ENCODE measurements at regions of chr7 and their contacts with region 1.

Region 1: DNA sequence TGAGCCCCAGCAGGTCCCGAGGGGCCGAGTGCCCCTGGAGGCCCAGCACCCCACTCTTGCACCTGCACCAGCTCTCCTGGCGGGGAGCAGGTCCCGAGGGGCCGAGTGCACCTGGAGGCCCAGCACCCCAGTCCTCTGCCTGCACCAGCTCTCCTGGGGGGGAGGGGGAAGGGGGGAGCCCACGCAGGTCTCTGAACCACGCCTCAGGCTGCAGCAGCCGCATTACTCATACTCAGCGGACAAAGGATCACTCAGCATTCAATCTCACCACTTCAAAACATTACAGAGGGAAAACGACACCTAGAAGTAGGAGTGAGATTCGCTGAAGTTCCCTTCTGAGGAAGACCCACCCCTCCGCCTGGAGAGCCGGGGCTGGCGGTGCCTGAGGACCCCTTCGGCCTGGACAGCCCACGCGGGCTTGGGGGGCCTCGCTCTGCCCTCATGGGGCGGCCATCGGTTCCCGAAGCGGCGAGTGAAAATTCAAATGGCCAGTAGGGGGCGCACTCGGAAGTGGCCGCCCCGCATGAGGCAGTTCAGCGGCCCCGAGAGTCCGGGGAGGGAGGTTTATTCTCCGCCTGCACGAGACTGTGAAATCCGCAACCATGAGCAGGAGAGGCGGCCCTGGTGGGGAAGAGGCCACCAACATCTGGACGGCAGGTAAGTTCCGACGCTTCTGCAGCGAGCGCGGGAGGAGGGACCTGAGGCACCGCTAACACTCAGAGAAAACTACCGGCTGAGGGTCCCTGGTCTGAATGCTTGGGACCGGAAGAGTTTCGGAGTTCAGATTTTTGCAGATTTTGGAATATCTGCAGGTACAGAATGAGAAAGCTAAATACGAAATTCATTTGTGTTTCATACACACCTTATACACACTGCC is 1.1 kb upstream of the GPER1 start:
- DNase-seq: peak; percentile 42
- ATAC-seq: peak; percentile 77
- H3K4me3 ChIP-seq: peak overlapping the region; percentile 47
- H3K27ac ChIP-seq: no peak overlapping the region; the same call in 1 of the 2 replicates
- H3K4me1 ChIP-seq: peaks cover 31% of the 10 kb centered on the region
- H3K27me3 ChIP-seq: no peaks in the 10 kb centered on the region
- CTCF ChIP-seq: peak; percentile 75
- POLR2A ChIP-seq: no peak
- RAD21 ChIP-seq: peak; percentile 49

Region 2: DNA sequence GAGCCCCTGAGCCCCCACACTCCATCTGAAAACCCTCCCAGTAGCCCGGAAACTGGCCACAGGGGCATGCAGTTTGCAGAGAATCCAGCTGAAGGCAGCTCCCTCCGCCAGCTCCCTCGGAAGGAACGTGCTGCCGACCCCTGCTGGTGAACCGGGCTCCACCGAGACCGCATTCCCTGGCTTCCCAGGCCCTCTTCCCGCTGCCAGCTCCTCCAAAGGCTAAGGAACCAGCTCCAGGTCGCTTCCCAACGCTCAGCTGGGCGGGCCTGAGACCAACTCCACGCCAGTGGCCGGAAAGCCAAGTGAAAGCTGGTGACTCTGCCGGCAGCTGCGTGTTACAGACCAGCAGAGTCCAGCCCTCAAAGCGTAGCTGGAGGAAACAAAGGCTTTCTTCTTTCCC is 36.9 kb after region 1 on chr7:
- CTCF ChIA-PET with region 1: interaction called, 4 read pairs
- POLR2A ChIA-PET with region 1: no interaction called
- dilution Hi-C with region 1: no loop called
- in situ Hi-C with region 1: no loop called
- intact Hi-C with region 1: loop called (anchors 2 kb)
- DNase-seq: peak; percentile 79
- ATAC-seq: peak; percentile 96
- H3K4me3 ChIP-seq: no peak overlapping the region
- H3K27ac ChIP-seq: peak overlapping the region; percentile 10; the same call in 1 of the 2 replicates
- H3K4me1 ChIP-seq: peaks cover 3% of the 10 kb centered on the region
- H3K27me3 ChIP-seq: no peaks in the 10 kb centered on the region
- CTCF ChIP-seq: peak; percentile 69
- POLR2A ChIP-seq: no peak
- RAD21 ChIP-seq: peak; percentile 56

Region 3: GRCh38 chr7:1137510-1138167 is 50.8 kb after region 1 on chr7:
- CTCF ChIA-PET with region 1: interaction called, 5 read pairs
- POLR2A ChIA-PET with region 1: no interaction called
- dilution Hi-C with region 1: no loop called
- in situ Hi-C with region 1: no loop called
- intact Hi-C with region 1: loop called (anchors 5 kb)
- DNase-seq: no peak
- ATAC-seq: peak; percentile 87
- H3K4me3 ChIP-seq: peak overlapping the region; percentile 75
- H3K27ac ChIP-seq: peak overlapping the region; percentile 35; the same call in 1 of the 2 replicates
- H3K4me1 ChIP-seq: peaks cover 8% of the 10 kb centered on the region
- H3K27me3 ChIP-seq: no peaks in the 10 kb centered on the region
- CTCF ChIP-seq: no peak
- POLR2A ChIP-seq: no peak
- RAD21 ChIP-seq: no peak

Region 4: DNA sequence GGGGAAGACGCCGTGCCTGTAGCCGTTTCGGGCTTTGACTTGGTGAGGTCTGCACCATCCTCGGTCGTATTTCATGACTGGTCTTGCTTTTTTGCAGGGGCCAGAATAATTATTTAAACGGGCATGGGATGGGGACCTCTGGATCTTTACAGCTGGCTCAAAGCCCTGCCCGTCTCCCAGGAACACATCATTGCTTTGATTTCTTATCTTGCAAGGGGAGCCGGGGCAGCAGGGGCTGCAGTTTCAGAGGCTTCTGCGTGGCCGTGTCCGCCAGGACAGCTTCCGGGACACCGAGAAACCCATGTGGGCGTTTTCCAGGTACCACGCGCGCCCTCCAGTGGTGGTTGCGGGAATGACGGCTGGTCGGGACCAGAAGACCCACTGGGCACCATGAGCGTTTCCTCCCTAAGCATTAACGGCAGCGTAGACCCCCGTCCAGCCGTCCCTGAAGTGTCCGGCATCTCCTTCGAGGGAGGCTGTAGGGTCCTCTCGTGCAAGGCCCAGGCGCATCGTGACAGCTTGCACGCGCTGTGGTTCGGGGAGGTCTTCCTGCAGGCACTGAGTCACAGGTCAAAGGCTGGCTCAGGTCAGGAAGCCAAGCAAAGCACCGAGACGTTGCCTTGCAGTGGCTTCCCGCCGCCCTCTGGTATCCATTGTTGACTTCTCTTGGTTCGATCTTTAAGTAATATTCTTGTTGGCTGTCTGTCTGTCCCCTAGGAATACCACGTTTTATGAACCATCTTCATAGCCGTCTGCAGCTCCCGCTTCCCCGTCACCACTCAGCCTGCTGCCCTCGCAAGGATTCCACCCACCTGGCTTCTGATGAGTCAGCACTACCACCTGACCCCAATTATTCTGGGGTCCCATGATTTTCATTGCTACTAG is 89.4 kb after region 1 on chr7:
- CTCF ChIA-PET with region 1: interaction called, 4 read pairs
- POLR2A ChIA-PET with region 1: no interaction called
- dilution Hi-C with region 1: no loop called
- in situ Hi-C with region 1: no loop called
- intact Hi-C with region 1: loop called (anchors 1 kb)
- DNase-seq: peak; percentile 52
- ATAC-seq: peak; percentile 96
- H3K4me3 ChIP-seq: no peak overlapping the region
- H3K27ac ChIP-seq: no peak overlapping the region
- H3K4me1 ChIP-seq: 0 out of 2 replicates have a peak, but pooled peaks cover 2% of the 10 kb centered on the region
- H3K27me3 ChIP-seq: peaks cover 2% of the 10 kb centered on the region; the same call in 1 of the 2 replicates
- CTCF ChIP-seq: peak; percentile 86
- POLR2A ChIP-seq: no peak
- RAD21 ChIP-seq: peak; percentile 66

Region 5: DNA sequence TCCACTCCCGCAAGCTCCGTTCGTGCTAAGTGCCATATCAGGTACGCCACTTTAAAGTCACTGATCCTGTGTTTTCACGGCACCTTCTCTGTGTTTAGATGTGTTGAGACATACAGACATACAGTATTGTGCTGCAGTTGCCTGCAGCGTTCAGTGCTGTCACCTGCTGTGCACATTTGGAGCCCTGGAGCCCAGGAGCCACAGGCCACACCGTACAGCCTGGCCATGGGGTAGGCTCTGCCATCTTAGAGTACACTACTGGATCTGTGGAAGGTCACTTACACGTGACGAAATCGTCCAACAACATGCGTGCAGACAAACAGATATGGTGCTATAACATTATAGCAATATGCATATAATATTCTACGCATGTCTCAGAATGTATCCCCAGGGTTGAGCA is 694.5 kb after region 1 on chr7:
- CTCF ChIA-PET with region 1: no interaction called
- POLR2A ChIA-PET with region 1: no interaction called
- dilution Hi-C with region 1: no loop called
- in situ Hi-C with region 1: no loop called
- intact Hi-C with region 1: no loop called
- DNase-seq: no peak
- ATAC-seq: no peak
- H3K4me3 ChIP-seq: no peak overlapping the region
- H3K27ac ChIP-seq: no peak overlapping the region
- H3K4me1 ChIP-seq: no peaks in the 10 kb centered on the region
- H3K27me3 ChIP-seq: peaks cover 3% of the 10 kb centered on the region
- CTCF ChIP-seq: no peak
- POLR2A ChIP-seq: no peak
- RAD21 ChIP-seq: no peak